ENCODE measurements at regions of chr3 and their contacts with region 1.

Region 1: DNA sequence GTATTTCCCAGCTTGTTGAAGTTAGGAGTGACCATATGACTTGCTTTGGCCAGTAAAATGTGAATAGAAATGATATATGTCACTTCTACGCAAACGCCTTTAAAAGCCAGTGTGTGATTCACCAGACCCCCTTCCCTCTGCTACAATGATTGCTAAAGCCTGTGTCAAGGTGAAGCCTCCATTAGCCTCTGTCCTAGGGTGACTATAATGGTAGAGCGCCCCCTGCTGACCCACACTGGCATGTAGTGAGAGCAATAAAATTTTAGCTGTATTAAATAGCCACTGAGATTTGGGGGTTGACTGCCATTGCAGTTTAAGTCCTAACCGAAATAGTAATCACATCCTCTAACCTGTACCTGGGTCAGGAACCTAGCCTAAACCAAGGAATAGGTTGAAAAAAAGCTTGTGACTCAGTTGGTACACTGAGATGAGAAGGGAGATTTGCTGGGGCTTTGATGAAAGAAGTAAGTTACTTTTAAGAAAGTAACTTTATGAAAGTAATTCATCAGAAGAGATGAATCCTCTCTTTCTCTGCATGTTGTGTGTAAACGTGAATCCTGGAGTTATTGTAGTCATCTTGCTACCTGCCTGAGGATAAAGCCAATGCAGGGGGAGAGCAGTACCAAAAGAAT is 52.6 kb downstream of the GTF2E1 start:
- DNase-seq: peak; percentile 84

Region 2: DNA sequence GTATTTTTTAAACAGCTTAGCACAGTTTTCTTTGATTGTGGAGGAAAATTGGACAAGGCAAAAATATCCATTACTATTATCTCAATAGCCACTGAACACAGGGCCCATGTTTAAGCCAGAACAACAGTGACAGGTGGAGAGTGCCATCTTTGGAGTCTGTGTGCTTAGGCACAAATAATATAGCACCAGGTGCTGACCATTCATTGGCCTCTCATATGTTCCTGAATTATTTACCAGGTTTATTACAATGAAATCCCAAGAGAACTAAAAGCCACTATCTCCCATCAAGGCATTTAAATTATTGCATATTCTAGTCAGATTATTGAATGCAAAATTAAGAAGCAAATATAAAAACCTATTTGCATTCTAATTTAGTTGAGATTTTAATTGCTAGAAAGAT is 549.7 kb before region 1 on chr3:
- intact Hi-C with region 1: loop called (anchors 10 kb)
- DNase-seq: no peak